IMR-90 (cell line): ENCODE measurements at regions of chr11 and their contacts with region 1.

Region 1: GRCh38 chr11:73734993-73735392 is 25.9 kb downstream of the RAB6A start:
- DNase-seq: peak; percentile 34
- ATAC-seq: peak; percentile 72
- H3K4me3 ChIP-seq: no peak overlapping the region
- H3K27ac ChIP-seq: no peak overlapping the region
- H3K4me1 ChIP-seq: 0 out of 2 replicates have a peak, but pooled peaks cover 1% of the 10 kb centered on the region
- H3K27me3 ChIP-seq: no peaks in the 10 kb centered on the region
- CTCF ChIP-seq: no peak
- POLR2A ChIP-seq: no peak
- RAD21 ChIP-seq: no peak

Region 2: DNA sequence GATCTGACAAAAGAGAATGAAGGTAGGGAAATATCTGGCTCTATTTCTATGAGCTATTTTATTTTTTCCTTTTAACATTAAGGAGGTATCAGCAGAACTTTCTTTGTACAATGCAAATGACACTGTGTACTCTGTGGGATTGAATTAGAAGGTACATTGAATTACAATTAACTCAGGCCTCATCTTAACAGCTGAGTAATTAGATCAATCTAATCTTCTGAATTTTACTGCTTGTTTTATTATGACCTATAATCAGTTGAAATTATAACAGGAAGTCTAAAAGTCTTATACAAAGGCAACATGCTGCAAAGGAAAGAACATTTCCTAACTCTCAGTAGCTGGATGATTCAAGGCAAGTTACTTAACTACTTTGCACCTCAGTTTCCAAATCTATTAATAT is 289.0 kb before region 1 on chr11:
- CTCF ChIA-PET with region 1: no interaction called
- POLR2A ChIA-PET with region 1: no interaction called
- dilution Hi-C with region 1: no loop called
- in situ Hi-C with region 1: no loop called
- intact Hi-C with region 1: no loop called
- DNase-seq: no peak
- ATAC-seq: no peak
- H3K4me3 ChIP-seq: no peak overlapping the region
- H3K27ac ChIP-seq: no peak overlapping the region
- H3K4me1 ChIP-seq: no peaks in the 10 kb centered on the region
- H3K27me3 ChIP-seq: no peaks in the 10 kb centered on the region
- CTCF ChIP-seq: no peak
- POLR2A ChIP-seq: no peak
- RAD21 ChIP-seq: no peak

Region 3: DNA sequence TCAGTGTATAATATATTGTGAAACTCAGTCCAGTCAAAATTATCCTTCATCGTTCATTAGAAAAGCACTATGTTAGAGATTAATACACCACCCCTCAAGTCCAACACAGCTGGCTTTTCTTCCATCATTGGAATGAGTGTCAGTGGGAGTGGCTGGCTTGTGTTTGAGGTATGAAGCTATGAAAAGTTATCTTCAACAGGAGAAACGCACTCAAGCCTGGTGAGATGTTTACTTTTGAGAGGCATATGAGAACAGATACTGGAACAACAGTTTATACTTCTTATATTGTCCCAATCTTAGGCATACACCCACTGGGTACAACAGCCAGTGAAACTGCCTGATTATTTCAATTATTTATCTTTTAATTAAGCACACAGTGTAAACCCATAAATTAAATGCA is 54.3 kb before region 1 on chr11:
- CTCF ChIA-PET with region 1: no interaction called
- POLR2A ChIA-PET with region 1: no interaction called
- dilution Hi-C with region 1: no loop called
- in situ Hi-C with region 1: no loop called
- intact Hi-C with region 1: loop called (anchors 5 kb)
- DNase-seq: peak; percentile 44
- ATAC-seq: peak; percentile 84
- H3K4me3 ChIP-seq: no peak overlapping the region
- H3K27ac ChIP-seq: peak overlapping the region; percentile 21; the same call in 1 of the 2 replicates
- H3K4me1 ChIP-seq: no peaks in the 10 kb centered on the region
- H3K27me3 ChIP-seq: no peaks in the 10 kb centered on the region
- CTCF ChIP-seq: no peak
- POLR2A ChIP-seq: no peak
- RAD21 ChIP-seq: no peak

Region 4: GRCh38 chr11:73705053-73705452 is 29.9 kb before region 1 on chr11:
- CTCF ChIA-PET with region 1: no interaction called
- POLR2A ChIA-PET with region 1: no interaction called
- dilution Hi-C with region 1: no loop called
- in situ Hi-C with region 1: no loop called
- intact Hi-C with region 1: no loop called
- DNase-seq: no peak
- ATAC-seq: no peak
- H3K4me3 ChIP-seq: no peak overlapping the region
- H3K27ac ChIP-seq: no peak overlapping the region
- H3K4me1 ChIP-seq: no peaks in the 10 kb centered on the region
- H3K27me3 ChIP-seq: no peaks in the 10 kb centered on the region
- CTCF ChIP-seq: no peak
- POLR2A ChIP-seq: no peak
- RAD21 ChIP-seq: no peak

Region 5: DNA sequence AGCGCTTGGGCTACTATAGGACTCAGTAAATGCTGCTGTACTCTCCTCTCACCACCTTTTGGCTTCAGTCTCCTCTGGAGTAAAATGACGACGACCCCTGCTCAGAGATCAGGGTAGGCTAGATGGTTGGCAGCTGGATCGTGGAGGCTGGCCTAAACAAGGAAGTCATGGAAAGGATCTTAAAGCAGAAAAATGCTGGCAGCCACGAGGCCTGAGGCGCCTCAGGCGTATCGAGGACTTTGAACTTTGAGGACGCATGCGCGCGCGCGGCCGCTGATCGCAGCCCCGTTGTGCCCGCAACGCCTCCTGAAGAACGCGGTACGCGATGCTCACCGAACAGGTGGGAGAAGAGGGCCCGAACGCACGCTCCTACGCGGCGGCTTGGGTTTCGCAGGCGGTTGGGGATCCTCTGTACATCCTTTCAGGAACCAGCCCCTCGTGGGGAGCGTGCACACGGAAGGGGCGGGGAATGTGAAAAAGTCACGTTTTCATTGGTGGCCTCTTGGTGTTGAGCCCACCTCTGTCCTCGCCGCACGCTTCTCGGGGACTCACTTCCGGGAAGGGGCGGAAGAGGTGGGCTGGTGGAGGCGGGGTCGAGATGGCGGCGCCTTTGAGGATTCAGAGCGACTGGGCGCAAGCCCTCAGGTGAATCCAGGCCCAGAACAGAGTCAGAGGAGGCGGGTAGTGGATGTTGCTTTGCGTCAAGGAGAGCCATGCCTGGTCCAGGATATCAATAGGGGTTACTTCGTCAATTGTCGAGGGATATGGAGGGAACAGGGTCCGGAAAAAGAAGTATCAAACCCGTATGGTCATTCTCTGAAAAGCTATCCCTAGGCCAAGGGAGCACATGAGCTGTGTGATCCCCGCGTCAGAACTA is 141.7 kb after region 1 on chr11 and contains the starts of genes COA4 and PAAF1:
- CTCF ChIA-PET with region 1: no interaction called
- POLR2A ChIA-PET with region 1: no interaction called
- dilution Hi-C with region 1: no loop called
- in situ Hi-C with region 1: no loop called
- intact Hi-C with region 1: no loop called
- DNase-seq: peak; percentile 95
- ATAC-seq: peak; percentile 97
- H3K4me3 ChIP-seq: peak within 1 kb of the TSS; percentile 97
- H3K27ac ChIP-seq: peak within 1 kb of the TSS; percentile 99
- H3K4me1 ChIP-seq: peaks cover 5% of the 10 kb centered on the region
- H3K27me3 ChIP-seq: no peaks in the 10 kb centered on the region
- CTCF ChIP-seq: no peak
- POLR2A ChIP-seq: peak; percentile 68; the same call in 1 of the 2 replicates
- RAD21 ChIP-seq: no peak
- total RNA-seq, gene COA4: 78.0 and 95.5 TPM in 2 replicates
- total RNA-seq, gene PAAF1: 15.0 and 15.1 TPM in 2 replicates

Region 6: GRCh38 chr11:74090701-74091100 is 355.7 kb after region 1 on chr11:
- CTCF ChIA-PET with region 1: no interaction called
- POLR2A ChIA-PET with region 1: no interaction called
- dilution Hi-C with region 1: no loop called
- in situ Hi-C with region 1: no loop called
- intact Hi-C with region 1: no loop called
- DNase-seq: peak; percentile 29
- ATAC-seq: no peak
- H3K4me3 ChIP-seq: no peak overlapping the region
- H3K27ac ChIP-seq: no peak overlapping the region
- H3K4me1 ChIP-seq: no peaks in the 10 kb centered on the region
- H3K27me3 ChIP-seq: no peaks in the 10 kb centered on the region
- CTCF ChIP-seq: peak; percentile 21; the same call in 1 of the 2 replicates
- POLR2A ChIP-seq: no peak
- RAD21 ChIP-seq: peak; percentile 23; the same call in 1 of the 2 replicates